ENCODE measurements at regions of chr1 and their contacts with region 1.

Region 1: DNA sequence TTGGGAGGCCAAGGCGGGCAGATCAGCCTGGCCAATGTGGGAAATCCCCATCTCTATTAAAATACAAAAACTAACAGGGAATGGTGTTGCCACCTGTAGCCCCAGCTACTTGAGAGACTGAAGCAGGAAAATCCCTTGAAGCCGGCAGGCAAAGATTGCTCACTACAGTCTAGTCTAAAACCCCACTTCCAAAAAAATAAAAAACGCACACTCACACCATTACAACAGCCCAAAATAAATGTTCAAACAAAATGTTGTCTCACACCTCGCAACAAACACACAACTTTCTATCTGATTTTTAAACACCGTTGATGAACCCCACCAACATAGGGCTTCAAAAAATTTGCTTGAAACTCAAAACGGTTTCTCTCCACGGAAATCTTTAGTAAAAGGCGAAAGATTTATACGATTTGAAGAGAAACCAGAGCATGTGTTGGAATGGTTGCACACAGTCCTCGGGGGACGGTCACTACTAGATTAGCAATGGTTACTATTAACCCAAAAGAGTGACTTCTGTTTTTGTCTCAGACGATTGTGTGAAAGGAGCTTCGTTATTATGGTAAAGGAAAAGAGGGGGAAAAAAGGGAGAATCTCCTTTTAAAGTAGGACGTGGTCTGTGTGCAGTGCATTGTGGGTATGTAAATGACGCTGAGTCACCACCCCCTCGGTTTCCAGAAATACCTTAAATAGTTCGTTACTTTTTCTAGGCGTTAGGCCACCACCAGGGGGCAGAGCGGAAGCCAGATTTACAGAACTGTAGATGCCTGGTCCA is at the start of gene RNU5D-1:
- DNase-seq: peak; percentile 91
- ATAC-seq: peak; percentile 84
- H3K4me3 Mint-ChIP-seq: peak within 1 kb of the TSS; percentile 80
- H3K27ac Mint-ChIP-seq: peak within 1 kb of the TSS; percentile 99
- H3K4me1 Mint-ChIP-seq: peaks cover 33% of the 10 kb centered on the region
- H3K27me3 Mint-ChIP-seq: no peaks in the 10 kb centered on the region
- total RNA-seq, gene RNU5D-1: not detected

Region 2: GRCh38 chr1:44714944-44715571 is 15.9 kb before region 1 on chr1:
- POLR2A ChIA-PET with region 1: interaction called, 500 read pairs
- DNase-seq: peak; percentile 65
- ATAC-seq: peak; percentile 79
- H3K4me3 Mint-ChIP-seq: peak overlapping the region; percentile 62
- H3K27ac Mint-ChIP-seq: peak overlapping the region; percentile 82
- H3K4me1 Mint-ChIP-seq: peaks cover 33% of the 10 kb centered on the region
- H3K27me3 Mint-ChIP-seq: peaks cover 8% of the 10 kb centered on the region

Region 3: GRCh38 chr1:44792783-44793714 is 62.1 kb after region 1 on chr1:
- POLR2A ChIA-PET with region 1: interaction called, 93 read pairs
- DNase-seq: peak; percentile 24
- ATAC-seq: no peak
- H3K4me3 Mint-ChIP-seq: no peak overlapping the region
- H3K27ac Mint-ChIP-seq: no peak overlapping the region
- H3K4me1 Mint-ChIP-seq: no peaks in the 10 kb centered on the region
- H3K27me3 Mint-ChIP-seq: no peaks in the 10 kb centered on the region

Region 4: GRCh38 chr1:44812822-44813543 is 82.1 kb after region 1 on chr1:
- POLR2A ChIA-PET with region 1: interaction called, 130 read pairs
- DNase-seq: peak; percentile 36
- ATAC-seq: no peak
- H3K4me3 Mint-ChIP-seq: peak overlapping the region; percentile 35
- H3K27ac Mint-ChIP-seq: peak overlapping the region; percentile 38
- H3K4me1 Mint-ChIP-seq: peaks cover 47% of the 10 kb centered on the region
- H3K27me3 Mint-ChIP-seq: no peaks in the 10 kb centered on the region

Region 5: GRCh38 chr1:45303582-45304310 is 572.8 kb after region 1 on chr1:
- POLR2A ChIA-PET with region 1: interaction called, 11 read pairs
- DNase-seq: peak; percentile 96
- ATAC-seq: peak; percentile 86
- H3K4me3 Mint-ChIP-seq: peak overlapping the region; percentile 90
- H3K27ac Mint-ChIP-seq: peak overlapping the region; percentile 96
- H3K4me1 Mint-ChIP-seq: peaks cover 28% of the 10 kb centered on the region
- H3K27me3 Mint-ChIP-seq: no peaks in the 10 kb centered on the region

Measured in activated naive CD8-positive, alpha-beta T cell treated with anti-CD3 and anti-CD28 coated beads, Interleukin-2, amount 10 ng/mL, durations not matched to agents 7 days and 5 days (primary cell).